ENCODE measurements at regions of chr1 and their contacts with region 1.

Region 1: DNA sequence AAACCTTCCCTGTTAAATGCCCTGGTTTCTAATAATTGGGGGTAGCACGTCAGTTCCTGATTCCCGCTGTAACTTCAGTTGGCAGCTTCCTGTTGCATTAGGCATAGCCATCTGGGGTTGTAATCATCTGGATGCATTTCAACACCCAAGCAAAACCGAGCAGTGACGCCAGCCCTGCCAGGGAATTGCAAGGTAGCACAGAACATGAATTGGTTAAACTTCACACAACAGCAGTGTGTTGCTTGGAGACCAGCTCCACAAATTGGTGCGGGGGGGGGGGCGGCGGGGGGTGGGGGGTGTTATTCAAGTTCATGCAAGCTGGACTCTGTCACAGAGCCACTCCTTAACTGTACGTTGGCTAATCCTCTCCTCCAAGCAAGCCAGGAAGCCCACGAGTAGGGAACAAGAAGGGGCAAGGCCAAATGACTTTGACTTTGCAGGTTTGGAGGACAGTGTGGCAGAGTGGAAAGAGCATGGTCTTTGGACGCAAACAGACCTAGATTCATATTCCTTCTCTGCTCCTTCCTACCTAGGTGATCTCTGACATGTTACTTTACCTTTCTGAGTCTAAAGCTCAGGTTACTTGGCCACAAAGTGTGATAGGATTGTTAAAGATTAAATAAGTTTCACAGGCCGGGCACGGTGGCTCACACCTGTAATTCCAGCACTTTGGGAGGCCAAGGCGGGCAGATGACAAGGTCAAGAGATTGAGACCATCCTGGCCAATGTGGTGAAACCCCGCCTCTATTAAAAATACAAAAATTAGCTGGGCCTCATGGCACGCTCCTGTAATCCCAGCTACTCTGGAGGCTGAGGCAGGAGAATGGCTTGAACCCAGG is 4.7 kb downstream of the LAX1 start:
- DNase-seq: no peak
- H3K4me3 ChIP-seq: no peak overlapping the region
- H3K4me3 Mint-ChIP-seq: peak overlapping the region in 6 of 8 donors; percentile 40 to 62 (median 47)
- H3K27ac ChIP-seq: no peak overlapping the region
- H3K27ac Mint-ChIP-seq: peak overlapping the region; percentile 41 to 97 (median 84)
- H3K4me1 ChIP-seq: peaks cover 26% of the 10 kb centered on the region
- H3K4me1 Mint-ChIP-seq: peaks cover 22 to 56% (median 36%) of the 10 kb centered on the region in 4 donors
- H3K27me3 ChIP-seq: no peaks in the 10 kb centered on the region
- H3K27me3 Mint-ChIP-seq: no peaks in the 10 kb centered on the region

Region 2: GRCh38 chr1:203326830-203327683 is 442.7 kb before region 1 on chr1:
- CTCF ChIA-PET with region 1: interaction called, 3 read pairs
- POLR2A ChIA-PET with region 1: interaction called, 5 read pairs
- intact Hi-C with region 1: loop called (anchors 5 kb)
- DNase-seq: peak; percentile 95 to 96 (median 95)
- H3K4me3 ChIP-seq: peak overlapping the region; percentile 15 to 64
- H3K4me3 Mint-ChIP-seq: peak overlapping the region; percentile 79 to 91 (median 86)
- H3K27ac ChIP-seq: peak overlapping the region; percentile 97
- H3K27ac Mint-ChIP-seq: peak overlapping the region; percentile 91 to 99 (median 98)
- H3K4me1 ChIP-seq: peaks cover 64% of the 10 kb centered on the region
- H3K4me1 Mint-ChIP-seq: peaks cover 49 to 73% (median 60%) of the 10 kb centered on the region in 4 donors
- H3K27me3 ChIP-seq: no peaks in the 10 kb centered on the region
- H3K27me3 Mint-ChIP-seq: no peaks in the 10 kb centered on the region

Region 3: DNA sequence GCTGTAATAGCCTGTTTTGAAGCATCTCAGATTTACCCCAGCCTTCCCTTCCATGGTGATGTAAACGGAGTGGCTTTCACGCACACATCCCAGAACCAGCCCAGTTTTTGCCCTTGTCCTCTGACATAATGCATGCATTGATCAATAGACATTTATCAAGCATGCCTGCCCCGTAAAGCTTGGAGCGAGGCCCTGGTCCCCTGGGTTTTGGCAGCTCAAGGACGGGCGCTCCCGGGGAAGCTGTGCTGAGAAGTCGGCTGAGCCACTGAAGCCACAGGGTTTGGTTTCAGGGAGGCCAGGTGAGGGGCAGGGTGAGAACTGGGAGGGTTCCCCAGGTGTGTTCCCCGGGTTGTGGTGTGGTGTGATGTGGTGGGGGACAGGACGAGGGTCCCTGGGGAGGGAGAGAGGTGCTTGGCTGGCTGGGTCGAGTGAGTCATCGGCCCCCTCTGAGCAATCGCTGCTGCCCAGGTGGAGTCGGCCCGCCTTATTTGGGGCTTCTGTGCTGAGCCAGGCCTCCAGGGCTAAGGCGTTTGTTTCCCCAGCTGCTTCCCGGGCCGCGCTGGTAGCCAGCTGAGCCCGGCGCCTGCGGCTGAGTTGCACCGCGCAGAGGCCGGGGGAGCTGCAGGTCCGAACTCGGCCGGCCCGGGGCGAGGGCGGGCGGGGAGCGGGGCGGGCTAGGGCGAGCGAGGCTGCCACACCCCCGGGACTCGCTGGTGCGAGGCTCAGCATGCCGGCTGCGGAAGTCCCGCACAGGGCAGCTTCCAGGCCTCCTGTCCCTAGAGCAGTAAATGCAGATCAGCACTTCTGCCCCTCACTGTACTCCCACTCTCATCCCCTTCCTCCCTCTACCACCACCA is 119.5 kb before region 1 on chr1:
- CTCF ChIA-PET with region 1: interaction called, 4 read pairs
- POLR2A ChIA-PET with region 1: interaction called, 12 read pairs
- intact Hi-C with region 1: no loop called
- DNase-seq: peak; percentile 59 to 95 (median 67)
- H3K4me3 ChIP-seq: peak overlapping the region; percentile 13 to 54
- H3K4me3 Mint-ChIP-seq: peak overlapping the region; percentile 82 to 93 (median 88)
- H3K27ac ChIP-seq: peak overlapping the region; percentile 78
- H3K27ac Mint-ChIP-seq: peak overlapping the region; percentile 96 to 99 (median 98)
- H3K4me1 ChIP-seq: peaks cover 74% of the 10 kb centered on the region
- H3K4me1 Mint-ChIP-seq: peaks cover 50 to 81% (median 68%) of the 10 kb centered on the region in 4 donors
- H3K27me3 ChIP-seq: no peaks in the 10 kb centered on the region
- H3K27me3 Mint-ChIP-seq: no peaks in the 10 kb centered on the region

Region 4: GRCh38 chr1:203682473-203683383 is 87.0 kb before region 1 on chr1:
- CTCF ChIA-PET with region 1: no interaction called
- POLR2A ChIA-PET with region 1: interaction called, 18 read pairs
- intact Hi-C with region 1: no loop called
- DNase-seq: peak; percentile 85 to 93 (median 90)
- H3K4me3 ChIP-seq: peak overlapping the region in 1 of 2 donors; percentile 12
- H3K4me3 Mint-ChIP-seq: peak overlapping the region; percentile 39 to 73 (median 63)
- H3K27ac ChIP-seq: peak overlapping the region; percentile 74
- H3K27ac Mint-ChIP-seq: peak overlapping the region; percentile 89 to 99 (median 98)
- H3K4me1 ChIP-seq: peaks cover 73% of the 10 kb centered on the region
- H3K4me1 Mint-ChIP-seq: peaks cover 47 to 77% (median 62%) of the 10 kb centered on the region in 4 donors
- H3K27me3 ChIP-seq: no peaks in the 10 kb centered on the region
- H3K27me3 Mint-ChIP-seq: no peaks in the 10 kb centered on the region

Region 5: GRCh38 chr1:203720262-203720661 is 49.5 kb before region 1 on chr1:
- CTCF ChIA-PET with region 1: no interaction called
- POLR2A ChIA-PET with region 1: interaction called, 16 read pairs
- intact Hi-C with region 1: loop called (anchors 5 kb)
- DNase-seq: no peak
- H3K4me3 ChIP-seq: no peak overlapping the region
- H3K4me3 Mint-ChIP-seq: no peak overlapping the region
- H3K27ac ChIP-seq: no peak overlapping the region
- H3K27ac Mint-ChIP-seq: peak overlapping the region in 1 of 7 donors; percentile 78
- H3K4me1 ChIP-seq: no peaks in the 10 kb centered on the region
- H3K4me1 Mint-ChIP-seq: no peaks in the 10 kb centered on the region
- H3K27me3 ChIP-seq: no peaks in the 10 kb centered on the region
- H3K27me3 Mint-ChIP-seq: no peaks in the 10 kb centered on the region

Region 6: GRCh38 chr1:203744075-203744972 is 25.4 kb before region 1 on chr1:
- CTCF ChIA-PET with region 1: interaction called, 21 read pairs
- POLR2A ChIA-PET with region 1: interaction called, 69 read pairs
- intact Hi-C with region 1: loop called (anchors 1 kb)
- DNase-seq: peak; percentile 39 to 75 (median 58)
- H3K4me3 ChIP-seq: peak overlapping the region in 1 of 2 donors; percentile 41
- H3K4me3 Mint-ChIP-seq: peak overlapping the region; percentile 61 to 86 (median 74)
- H3K27ac ChIP-seq: peak overlapping the region; percentile 50
- H3K27ac Mint-ChIP-seq: peak overlapping the region; percentile 89 to 97 (median 95)
- H3K4me1 ChIP-seq: peaks cover 15% of the 10 kb centered on the region
- H3K4me1 Mint-ChIP-seq: peaks cover 24 to 32% (median 28%) of the 10 kb centered on the region in 4 donors
- H3K27me3 ChIP-seq: no peaks in the 10 kb centered on the region
- H3K27me3 Mint-ChIP-seq: no peaks in the 10 kb centered on the region

Region 7: GRCh38 chr1:203795441-203796235 is 25.9 kb after region 1 on chr1 and contains the starts of genes ZBED6 and ZC3H11A:
- CTCF ChIA-PET with region 1: interaction called, 3 read pairs
- POLR2A ChIA-PET with region 1: interaction called, 16 read pairs
- intact Hi-C with region 1: loop called (anchors 1 kb)
- DNase-seq: peak; percentile 96 to 100 (median 98)
- H3K4me3 ChIP-seq: peak within 1 kb of the TSS; percentile 72 to 74
- H3K4me3 Mint-ChIP-seq: peak within 1 kb of the TSS; percentile 91 to 99 (median 97)
- H3K27ac ChIP-seq: peak within 1 kb of the TSS; percentile 81
- H3K27ac Mint-ChIP-seq: peak within 1 kb of the TSS; percentile 86 to 99 (median 98)
- H3K4me1 ChIP-seq: peaks cover 51% of the 10 kb centered on the region
- H3K4me1 Mint-ChIP-seq: peaks cover 35 to 57% (median 48%) of the 10 kb centered on the region in 4 donors
- H3K27me3 ChIP-seq: no peaks in the 10 kb centered on the region
- H3K27me3 Mint-ChIP-seq: no peaks in the 10 kb centered on the region
- total RNA-seq, gene ZBED6: 26.5 to 29.3 TPM
- total RNA-seq, gene ZC3H11A: 132 to 141 TPM

Measured in CD4-positive, alpha-beta memory T cell (primary cell).